B cell (primary cell): ENCODE measurements at regions of chr6 and their contacts with region 1.

Region 1: GRCh38 chr6:145214570-145214969 is 520.8 kb downstream of the EPM2A start:
- DNase-seq: peak; percentile 16
- ATAC-seq: no peak
- H3K4me3 ChIP-seq: no peak overlapping the region
- H3K4me3 Mint-ChIP-seq: no peak overlapping the region
- H3K27ac ChIP-seq: no peak overlapping the region
- H3K27ac Mint-ChIP-seq: no peak overlapping the region
- H3K4me1 ChIP-seq: no peaks in the 10 kb centered on the region
- H3K4me1 Mint-ChIP-seq: peaks cover 6% of the 10 kb centered on the region
- H3K27me3 ChIP-seq: no peaks in the 10 kb centered on the region
- H3K27me3 Mint-ChIP-seq: peaks cover 4% of the 10 kb centered on the region
- CTCF ChIP-seq: peak; percentile 68

Region 2: DNA sequence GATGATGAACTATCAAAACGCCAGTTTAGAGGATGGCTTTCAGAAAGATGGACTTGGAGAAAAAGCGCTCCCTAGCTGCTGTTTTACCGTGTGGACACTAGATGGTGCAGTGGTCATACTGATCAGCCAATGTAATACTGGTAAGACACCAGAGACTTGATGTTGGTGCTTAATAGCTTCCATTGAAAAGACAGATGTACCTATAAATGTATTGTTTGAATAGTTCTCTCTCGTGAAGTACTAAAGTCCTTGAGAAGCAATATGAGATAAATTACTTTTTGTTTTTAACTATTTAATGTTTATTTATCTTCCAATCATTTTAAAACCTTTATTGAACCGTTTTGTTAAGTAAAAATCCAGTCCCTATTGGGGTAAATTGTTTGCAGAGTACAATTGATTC is 1639.1 kb before region 1 on chr6:
- CTCF ChIA-PET with region 1: no interaction called
- POLR2A ChIA-PET with region 1: no interaction called
- intact Hi-C with region 1: loop called (anchors 5 kb)
- DNase-seq: peak; percentile 76
- ATAC-seq: peak; percentile 98
- H3K4me3 ChIP-seq: no peak overlapping the region
- H3K4me3 Mint-ChIP-seq: no peak overlapping the region
- H3K27ac ChIP-seq: no peak overlapping the region
- H3K27ac Mint-ChIP-seq: no peak overlapping the region
- H3K4me1 ChIP-seq: no peaks in the 10 kb centered on the region
- H3K4me1 Mint-ChIP-seq: no peaks in the 10 kb centered on the region
- H3K27me3 ChIP-seq: no peaks in the 10 kb centered on the region
- H3K27me3 Mint-ChIP-seq: no peaks in the 10 kb centered on the region
- CTCF ChIP-seq: peak; percentile 95

Region 3: DNA sequence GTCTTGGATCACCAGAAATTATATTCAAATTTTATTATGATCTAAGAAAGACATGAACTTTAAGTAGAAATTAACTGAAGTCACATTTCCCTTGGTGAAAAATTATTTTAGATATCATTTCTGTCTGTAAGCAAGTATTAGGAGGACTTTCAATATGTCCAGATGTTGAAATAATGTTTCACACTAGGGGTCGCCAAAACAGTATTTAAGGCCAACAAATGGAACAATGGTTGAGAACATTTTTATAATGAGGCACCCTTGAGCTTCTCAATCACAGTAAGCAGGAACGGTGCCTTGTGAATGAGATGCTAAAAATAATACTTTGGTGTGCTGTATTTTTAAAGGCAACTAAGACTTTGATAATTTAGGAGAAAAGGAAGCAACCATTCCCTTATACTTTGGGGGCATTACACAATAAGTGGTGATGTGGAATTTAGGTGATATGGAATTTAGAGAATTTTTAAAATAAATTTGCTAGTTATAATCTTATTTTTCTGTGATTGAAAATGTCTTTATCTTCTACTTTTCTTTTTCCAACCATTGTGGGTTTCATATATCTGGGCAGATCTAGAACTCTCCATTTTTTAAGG is 1109.6 kb before region 1 on chr6:
- CTCF ChIA-PET with region 1: no interaction called
- POLR2A ChIA-PET with region 1: no interaction called
- intact Hi-C with region 1: loop called (anchors 10 kb)
- DNase-seq: peak; percentile 81
- ATAC-seq: peak; percentile 80
- H3K4me3 ChIP-seq: no peak overlapping the region
- H3K4me3 Mint-ChIP-seq: no peak overlapping the region
- H3K27ac ChIP-seq: no peak overlapping the region
- H3K27ac Mint-ChIP-seq: no peak overlapping the region
- H3K4me1 ChIP-seq: no peaks in the 10 kb centered on the region
- H3K4me1 Mint-ChIP-seq: no peaks in the 10 kb centered on the region
- H3K27me3 ChIP-seq: no peaks in the 10 kb centered on the region
- H3K27me3 Mint-ChIP-seq: no peaks in the 10 kb centered on the region
- CTCF ChIP-seq: peak; percentile 84